T-cell (primary cell): ENCODE measurements at regions of chr7 and their contacts with region 1.

Region 1: DNA sequence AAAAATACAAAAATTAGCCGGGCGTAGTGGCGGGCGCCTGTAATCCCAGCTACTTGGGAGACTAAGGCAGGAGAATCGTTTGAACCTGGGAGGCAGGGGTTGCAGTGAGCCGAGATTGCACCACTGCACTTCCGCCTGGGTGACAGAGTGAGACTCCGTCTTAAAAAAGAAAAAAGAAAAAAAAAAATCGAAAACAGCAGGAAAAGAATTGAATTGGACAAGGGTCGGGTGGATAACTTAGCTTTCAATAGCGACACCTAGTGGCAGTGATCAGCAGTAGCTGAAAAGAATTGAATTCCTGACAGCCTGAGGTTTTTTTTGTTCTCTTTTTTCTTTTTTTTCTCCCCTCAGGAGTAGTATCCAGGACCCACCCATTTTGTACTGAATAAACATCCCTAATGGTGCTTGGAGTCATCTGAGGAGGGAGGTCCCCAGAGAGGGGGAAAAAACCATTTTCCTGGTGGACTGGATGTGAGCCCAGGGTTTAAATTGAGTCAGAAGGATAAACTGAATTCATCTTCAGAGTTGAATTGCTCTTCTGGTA is 55.1 kb downstream of the CYCS start:
- DNase-seq: peak in 30 of 35 experiments; percentile 3 to 81 (median 24)
- ATAC-seq: peak in 1 of 4 experiments; percentile 61
- H3K4me3 ChIP-seq: no peak overlapping the region
- H3K4me3 Mint-ChIP-seq: no peak overlapping the region
- H3K27ac ChIP-seq: no peak overlapping the region
- H3K27ac Mint-ChIP-seq: no peak overlapping the region
- H3K4me1 ChIP-seq: peaks cover 0 to 3% of the 10 kb centered on the region in 2 experiments
- H3K4me1 Mint-ChIP-seq: peaks cover 4 to 6% (median 5%) of the 10 kb centered on the region in 3 donors
- H3K27me3 ChIP-seq: no peaks in the 10 kb centered on the region
- H3K27me3 Mint-ChIP-seq: no peaks in the 10 kb centered on the region

Region 2: GRCh38 chr7:23721456-23721855 is 1348.5 kb before region 1 on chr7:
- CTCF ChIA-PET with region 1: no interaction called
- POLR2A ChIA-PET with region 1: no interaction called
- DNase-seq: no peak
- ATAC-seq: no peak
- H3K4me3 ChIP-seq: no peak overlapping the region
- H3K4me3 Mint-ChIP-seq: no peak overlapping the region
- H3K27ac ChIP-seq: no peak overlapping the region
- H3K27ac Mint-ChIP-seq: no peak overlapping the region
- H3K4me1 ChIP-seq: no peaks in the 10 kb centered on the region
- H3K4me1 Mint-ChIP-seq: no peaks in the 10 kb centered on the region
- H3K27me3 ChIP-seq: no peaks in the 10 kb centered on the region
- H3K27me3 Mint-ChIP-seq: no peaks in the 10 kb centered on the region

Region 3: GRCh38 chr7:25093268-25093826 is 23.4 kb after region 1 on chr7:
- CTCF ChIA-PET with region 1: interaction called, 10 to 25 read pairs
- POLR2A ChIA-PET with region 1: no interaction called
- DNase-seq: peak; percentile 22 to 80 (median 68)
- ATAC-seq: peak; percentile 77 to 80 (median 78)
- H3K4me3 ChIP-seq: no peak overlapping the region
- H3K4me3 Mint-ChIP-seq: no peak overlapping the region
- H3K27ac ChIP-seq: no peak overlapping the region
- H3K27ac Mint-ChIP-seq: no peak overlapping the region
- H3K4me1 ChIP-seq: peaks cover 0 to 8% of the 10 kb centered on the region in 2 experiments
- H3K4me1 Mint-ChIP-seq: peaks cover 5 to 11% (median 5%) of the 10 kb centered on the region in 3 donors
- H3K27me3 ChIP-seq: no peaks in the 10 kb centered on the region
- H3K27me3 Mint-ChIP-seq: no peaks in the 10 kb centered on the region

Region 4: DNA sequence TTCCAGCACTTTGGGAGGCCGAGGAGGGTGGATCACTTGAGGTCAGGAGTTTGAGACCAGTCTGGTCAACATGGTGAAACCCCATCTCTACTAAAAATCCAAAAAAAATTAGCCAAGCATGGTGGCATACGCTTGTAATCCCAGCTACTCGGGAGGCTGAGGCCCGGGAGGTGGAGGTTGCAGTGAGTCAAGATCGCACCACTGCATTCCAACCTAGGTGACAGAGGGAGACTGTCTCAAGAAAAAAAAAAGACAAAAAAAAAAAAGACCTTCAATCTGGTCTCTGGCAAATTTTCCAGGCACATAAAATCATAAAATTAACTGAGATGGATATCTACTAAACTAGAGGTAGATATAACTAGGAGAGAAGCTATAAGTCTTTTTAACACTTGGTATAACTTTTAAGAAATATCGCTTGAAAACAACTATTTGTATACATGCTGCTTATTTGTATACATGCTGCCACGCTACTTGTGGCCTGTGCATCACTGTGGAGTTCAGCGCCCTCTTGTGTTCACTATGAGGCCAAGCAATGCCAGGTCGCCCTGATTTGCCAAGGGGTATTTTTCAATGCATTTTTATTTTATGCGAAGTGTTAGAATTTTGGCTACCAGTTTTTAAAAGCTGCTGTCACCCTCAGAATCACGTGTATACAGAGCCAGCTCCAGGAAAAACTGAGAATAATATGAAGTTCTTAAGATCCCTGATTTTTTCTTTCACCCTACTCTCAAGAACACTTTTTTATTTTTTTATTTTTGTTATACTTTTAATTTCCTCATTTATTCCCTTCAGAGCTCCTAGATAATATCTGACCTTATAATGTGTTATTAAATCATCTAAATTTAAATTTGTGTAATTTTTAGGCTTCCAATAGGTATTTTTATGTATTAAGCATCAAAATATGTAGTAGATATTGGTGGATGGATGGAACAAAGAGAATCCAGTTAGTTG is 28.4 kb after region 1 on chr7:
- CTCF ChIA-PET with region 1: interaction called, 10 to 25 read pairs
- POLR2A ChIA-PET with region 1: no interaction called
- DNase-seq: peak in 34 of 35 experiments; percentile 19 to 81 (median 46)
- ATAC-seq: peak; percentile 68 to 83 (median 72)
- H3K4me3 ChIP-seq: no peak overlapping the region
- H3K4me3 Mint-ChIP-seq: no peak overlapping the region
- H3K27ac ChIP-seq: no peak overlapping the region
- H3K27ac Mint-ChIP-seq: no peak overlapping the region
- H3K4me1 ChIP-seq: peaks cover 0 to 7% of the 10 kb centered on the region in 2 experiments
- H3K4me1 Mint-ChIP-seq: peaks cover 4 to 9% (median 5%) of the 10 kb centered on the region in 3 donors
- H3K27me3 ChIP-seq: no peaks in the 10 kb centered on the region
- H3K27me3 Mint-ChIP-seq: no peaks in the 10 kb centered on the region